Vagina (tissue), 2 donors: ENCODE measurements at regions of chr3 and their contacts with region 1.

Region 1: DNA sequence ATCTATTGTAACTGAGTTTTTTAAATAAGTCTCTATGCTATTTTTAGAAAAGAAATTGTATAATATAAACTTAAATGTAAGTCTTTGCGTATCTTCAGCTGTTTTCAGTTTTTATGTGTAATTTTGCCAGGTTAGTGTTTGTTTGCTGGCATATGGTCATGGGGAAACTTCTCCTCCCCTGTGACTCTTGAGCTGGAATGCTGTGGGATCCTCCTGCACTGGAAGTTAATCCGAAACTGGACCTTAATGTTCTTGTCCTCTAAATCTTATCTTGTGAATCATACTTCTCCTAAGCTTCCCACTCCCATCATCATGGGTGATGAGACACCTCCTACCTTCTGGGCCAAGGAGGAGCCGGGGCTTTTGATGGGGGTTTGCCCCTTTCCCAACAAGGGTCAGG is 52.4 kb upstream of the CHST2 start:
- DNase-seq: no peak
- H3K4me3 ChIP-seq: no peak overlapping the region
- H3K27ac ChIP-seq: peak overlapping the region; percentile 18
- H3K4me1 ChIP-seq: peaks cover 22% of the 10 kb centered on the region
- H3K27me3 ChIP-seq: no peaks in the 10 kb centered on the region
- CTCF ChIP-seq: no peak
- POLR2A ChIP-seq: no peak

Region 2: DNA sequence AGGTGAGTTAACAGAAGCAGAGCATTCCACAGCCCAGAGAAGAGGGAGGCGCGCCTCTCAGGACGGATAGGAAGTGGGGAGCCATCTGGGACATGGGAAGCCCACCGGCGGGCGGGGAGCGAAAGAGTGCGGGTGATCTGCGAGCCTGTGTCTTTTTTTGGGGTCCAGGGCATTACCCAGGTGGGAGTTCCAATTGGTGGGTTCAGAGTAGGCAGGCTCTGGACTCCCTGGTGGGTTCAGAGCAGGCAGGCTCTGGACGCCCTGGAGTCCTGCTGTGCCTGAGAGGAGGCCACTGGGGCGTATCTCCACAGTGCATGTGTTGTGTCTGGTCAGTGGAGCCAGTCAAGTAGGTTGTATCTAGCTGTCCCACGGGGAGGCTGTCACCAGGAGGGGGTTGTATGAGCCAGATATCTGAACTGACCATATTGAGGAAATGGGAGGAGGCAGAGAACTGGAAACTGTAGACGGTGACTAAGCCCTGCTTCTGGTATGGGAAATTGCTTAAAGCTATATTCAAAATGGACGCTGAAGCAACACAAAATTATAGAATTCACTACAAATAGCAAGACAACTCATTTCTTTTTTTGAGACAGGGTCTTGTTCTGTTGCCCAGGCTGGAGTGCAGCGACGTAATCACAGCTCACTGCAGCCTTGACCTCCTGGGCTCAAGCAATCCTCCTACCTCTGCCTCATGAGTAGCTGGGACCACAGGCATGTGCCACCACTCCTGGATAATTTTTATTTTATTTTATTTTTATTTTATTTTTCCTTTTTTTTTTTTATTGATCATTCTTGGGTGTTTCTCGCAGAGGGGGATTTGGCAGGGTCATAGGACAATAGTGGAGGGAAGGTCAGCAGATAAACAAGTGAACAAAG is 17.9 kb after region 1 on chr3:
- intact Hi-C with region 1: no loop called
- DNase-seq: no peak
- H3K4me3 ChIP-seq: no peak overlapping the region
- H3K27ac ChIP-seq: no peak overlapping the region
- H3K4me1 ChIP-seq: no peaks in the 10 kb centered on the region
- H3K27me3 ChIP-seq: no peaks in the 10 kb centered on the region
- CTCF ChIP-seq: no peak
- POLR2A ChIP-seq: no peak

Region 3: DNA sequence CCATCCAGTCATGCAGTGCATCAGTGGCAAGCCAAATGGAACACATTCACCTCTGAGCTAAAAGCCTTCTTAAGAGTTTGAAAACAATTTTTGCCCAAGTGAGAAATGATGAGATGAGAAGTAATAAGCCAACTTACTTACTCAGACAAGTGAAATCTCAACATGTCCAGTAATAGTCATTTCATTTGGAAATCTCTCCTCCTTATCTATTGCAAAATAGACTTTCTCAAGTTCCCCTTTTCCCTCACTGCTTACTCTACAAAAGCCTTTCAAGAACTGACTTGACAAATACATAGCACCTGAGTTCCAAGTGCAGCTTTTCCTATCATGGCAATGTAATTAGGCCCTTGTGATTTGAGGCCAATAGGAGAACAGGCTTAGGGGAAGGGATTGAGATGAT is 498.8 kb after region 1 on chr3:
- intact Hi-C with region 1: loop called (anchors 5 kb)
- DNase-seq: no peak
- H3K4me3 ChIP-seq: no peak overlapping the region
- H3K27ac ChIP-seq: no peak overlapping the region
- H3K4me1 ChIP-seq: no peaks in the 10 kb centered on the region
- H3K27me3 ChIP-seq: no peaks in the 10 kb centered on the region
- CTCF ChIP-seq: no peak
- POLR2A ChIP-seq: no peak

Region 4: DNA sequence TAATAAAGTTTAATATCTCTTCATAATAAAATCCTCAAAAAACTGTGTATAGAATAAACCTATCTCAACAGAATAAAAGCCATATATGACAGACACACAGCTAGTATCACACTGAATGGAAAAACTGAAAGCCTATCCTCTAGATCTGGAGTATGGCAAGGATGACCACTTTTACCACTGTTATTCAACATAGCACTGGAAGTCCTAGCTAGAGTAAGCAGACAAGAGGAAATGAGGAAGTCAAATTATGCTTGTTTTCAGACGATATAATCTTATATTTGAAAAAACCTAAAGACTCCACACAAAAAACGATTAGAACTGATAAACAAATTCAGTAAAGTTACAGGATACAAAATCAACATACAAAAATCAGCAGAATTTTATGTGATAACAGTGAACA is 847.1 kb after region 1 on chr3:
- intact Hi-C with region 1: no loop called
- DNase-seq: no peak
- H3K4me3 ChIP-seq: no peak overlapping the region
- H3K27ac ChIP-seq: no peak overlapping the region
- H3K4me1 ChIP-seq: no peaks in the 10 kb centered on the region
- H3K27me3 ChIP-seq: no peaks in the 10 kb centered on the region
- CTCF ChIP-seq: no peak
- POLR2A ChIP-seq: no peak